Activated CD4-positive, alpha-beta memory T cell treated with anti-CD3 and anti-CD28 coated beads, Interleukin-2, amount 10 ng/mL, durations not matched to agents 7 days and 5 days (primary cell): ENCODE measurements at regions of chr7 and their contacts with region 1.

Region 1: GRCh38 chr7:129825496-129826267 is 127.1 kb downstream of the UBE2H start:
- DNase-seq: peak; percentile 90
- H3K4me3 Mint-ChIP-seq: peak overlapping the region; percentile 90
- H3K27ac Mint-ChIP-seq: peak overlapping the region; percentile 71
- H3K4me1 Mint-ChIP-seq: peaks cover 24% of the 10 kb centered on the region
- H3K27me3 Mint-ChIP-seq: peaks cover 3% of the 10 kb centered on the region

Region 2: DNA sequence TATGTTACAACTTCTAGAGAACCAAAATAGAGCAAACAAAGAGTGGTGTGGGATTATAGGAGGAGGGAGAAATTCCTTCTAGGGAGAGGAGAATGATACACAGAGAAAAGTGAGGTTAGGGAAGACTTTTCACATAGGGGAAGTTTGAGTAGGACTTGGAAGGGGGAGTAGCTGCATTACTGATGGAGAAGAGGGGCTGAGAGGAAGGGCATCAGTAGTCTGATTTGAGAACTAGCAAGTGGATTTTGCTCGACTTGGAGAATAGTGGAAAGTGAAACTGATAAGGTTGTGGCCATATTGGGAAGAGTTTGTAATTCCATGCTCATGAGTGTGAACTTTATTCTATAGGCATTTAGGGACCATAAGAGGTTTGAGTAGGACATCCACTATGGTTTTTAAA is 208.0 kb before region 1 on chr7:
- CTCF ChIA-PET with region 1: interaction called, 10 read pairs
- POLR2A ChIA-PET with region 1: interaction called, 8 read pairs
- DNase-seq: no peak
- H3K4me3 Mint-ChIP-seq: no peak overlapping the region
- H3K27ac Mint-ChIP-seq: no peak overlapping the region
- H3K4me1 Mint-ChIP-seq: peaks cover 54% of the 10 kb centered on the region
- H3K27me3 Mint-ChIP-seq: no peaks in the 10 kb centered on the region

Region 3: GRCh38 chr7:129664029-129665012 is 161.4 kb before region 1 on chr7:
- CTCF ChIA-PET with region 1: interaction called, 15 read pairs
- POLR2A ChIA-PET with region 1: no interaction called
- DNase-seq: no peak
- H3K4me3 Mint-ChIP-seq: no peak overlapping the region
- H3K27ac Mint-ChIP-seq: no peak overlapping the region
- H3K4me1 Mint-ChIP-seq: no peaks in the 10 kb centered on the region
- H3K27me3 Mint-ChIP-seq: no peaks in the 10 kb centered on the region

Region 4: GRCh38 chr7:129780257-129780973 is 45.3 kb before region 1 on chr7:
- CTCF ChIA-PET with region 1: interaction called, 16 read pairs
- POLR2A ChIA-PET with region 1: no interaction called
- DNase-seq: peak; percentile 80
- H3K4me3 Mint-ChIP-seq: peak overlapping the region; percentile 71
- H3K27ac Mint-ChIP-seq: no peak overlapping the region
- H3K4me1 Mint-ChIP-seq: peaks cover 35% of the 10 kb centered on the region
- H3K27me3 Mint-ChIP-seq: peaks cover 64% of the 10 kb centered on the region

Region 5: DNA sequence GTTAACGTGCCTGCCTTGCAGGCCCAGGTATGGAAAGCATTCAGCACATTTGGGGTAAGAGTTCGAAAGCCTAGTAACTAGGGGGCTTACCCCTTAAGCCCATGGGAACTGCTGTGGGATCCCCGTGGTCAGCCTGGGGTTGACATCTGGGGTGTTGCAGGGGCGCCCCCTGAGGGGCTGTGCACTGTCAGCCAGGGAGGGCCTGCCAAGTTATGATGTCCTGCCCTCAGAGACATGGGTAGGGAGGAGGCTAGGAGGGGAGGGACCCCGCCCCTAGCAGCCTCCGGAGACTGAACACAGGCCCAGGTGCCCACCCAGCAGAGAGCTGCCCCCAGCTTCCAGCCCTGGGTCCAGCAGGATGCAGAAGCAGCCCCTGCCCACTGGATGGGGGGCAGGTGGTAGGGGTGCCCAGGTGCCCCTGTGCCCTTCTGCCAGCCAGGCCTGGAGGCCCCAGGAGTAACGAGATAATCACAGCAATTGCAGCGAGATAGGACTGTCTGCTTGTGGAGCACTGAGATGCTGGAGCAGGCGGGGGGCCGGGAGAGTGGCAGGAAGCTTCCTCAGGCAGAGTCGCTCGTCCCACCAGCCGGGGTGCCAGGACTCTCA is 26.2 kb before region 1 on chr7:
- CTCF ChIA-PET with region 1: no interaction called
- POLR2A ChIA-PET with region 1: no interaction called
- DNase-seq: no peak
- H3K4me3 Mint-ChIP-seq: no peak overlapping the region
- H3K27ac Mint-ChIP-seq: no peak overlapping the region
- H3K4me1 Mint-ChIP-seq: no peaks in the 10 kb centered on the region
- H3K27me3 Mint-ChIP-seq: peaks cover 3% of the 10 kb centered on the region

Region 6: DNA sequence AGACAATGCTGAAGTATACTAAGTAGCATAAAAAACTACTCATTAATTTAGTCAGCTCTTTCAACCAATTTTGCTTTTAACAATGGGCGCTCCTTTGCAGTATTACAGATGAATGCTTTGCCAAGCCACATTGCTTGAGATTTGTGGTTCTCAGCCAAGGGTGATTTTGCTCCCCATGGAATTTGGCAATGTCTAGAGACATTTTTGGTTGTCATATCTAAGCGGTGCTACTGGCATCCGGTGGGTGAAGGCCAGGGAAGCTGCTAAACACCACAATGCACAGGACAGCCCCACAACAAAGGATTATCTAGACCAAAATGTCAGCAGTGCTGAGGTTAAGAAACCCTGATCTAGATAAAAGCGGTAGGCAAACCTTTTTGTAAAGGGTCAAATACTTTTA is 15.1 kb after region 1 on chr7:
- CTCF ChIA-PET with region 1: interaction called, 15 read pairs
- POLR2A ChIA-PET with region 1: no interaction called
- DNase-seq: no peak
- H3K4me3 Mint-ChIP-seq: no peak overlapping the region
- H3K27ac Mint-ChIP-seq: no peak overlapping the region
- H3K4me1 Mint-ChIP-seq: peaks cover 43% of the 10 kb centered on the region
- H3K27me3 Mint-ChIP-seq: no peaks in the 10 kb centered on the region

Region 7: DNA sequence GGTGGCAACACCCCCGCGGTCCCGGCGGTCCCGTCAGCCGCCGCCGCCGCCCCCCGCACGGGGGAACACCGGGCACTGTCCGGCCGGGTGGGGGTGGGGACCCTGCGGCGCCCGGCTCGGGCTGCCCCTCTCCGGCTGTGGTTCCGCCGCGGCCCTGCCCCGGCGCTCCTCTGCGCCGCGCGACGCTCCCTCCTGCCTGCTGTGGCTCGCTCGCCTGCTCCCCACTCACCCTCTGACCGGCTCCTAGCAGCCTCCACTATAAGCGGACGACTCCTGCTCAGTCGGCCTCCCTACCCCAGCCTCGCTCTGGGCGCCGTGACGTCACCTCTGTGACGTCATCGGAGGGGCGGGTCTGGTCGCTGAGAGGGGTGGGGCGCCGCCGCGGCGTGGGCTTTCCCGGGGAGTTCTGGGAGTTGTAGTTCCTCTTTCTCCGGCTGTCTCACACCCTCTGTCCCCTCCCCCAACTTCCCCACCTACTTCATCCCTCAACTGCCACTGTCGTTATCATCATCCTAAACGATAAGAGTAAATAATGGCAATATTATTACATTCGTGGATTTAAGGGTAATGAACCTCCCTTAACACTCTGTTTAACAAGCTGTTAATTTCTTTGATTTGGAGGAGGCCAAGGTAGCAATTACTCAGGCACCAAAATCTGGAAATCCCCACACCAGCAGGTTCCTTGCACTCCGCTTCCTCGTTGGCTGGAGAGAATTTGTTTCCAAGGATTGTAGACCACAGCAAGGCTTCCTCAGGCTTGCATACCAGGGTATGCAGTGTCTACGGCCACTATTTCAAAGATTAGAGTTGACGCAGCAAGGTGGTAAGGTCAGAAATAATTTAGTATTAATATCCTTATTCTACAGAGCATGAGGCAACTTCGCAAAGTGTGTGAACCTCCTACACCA is 127.2 kb after region 1 on chr7 and contains the start of gene UBE2H:
- CTCF ChIA-PET with region 1: interaction called, 7 read pairs
- POLR2A ChIA-PET with region 1: interaction called, 13 read pairs
- DNase-seq: peak; percentile 93
- H3K4me3 Mint-ChIP-seq: peak within 1 kb of the TSS; percentile 91
- H3K27ac Mint-ChIP-seq: peak within 1 kb of the TSS; percentile 96
- H3K4me1 Mint-ChIP-seq: peaks cover 11% of the 10 kb centered on the region
- H3K27me3 Mint-ChIP-seq: no peaks in the 10 kb centered on the region
- total RNA-seq, gene UBE2H: 57.9 to 58.4 TPM

Region 8: GRCh38 chr7:130010689-130011412 is 185.2 kb after region 1 on chr7:
- CTCF ChIA-PET with region 1: interaction called, 55 read pairs
- POLR2A ChIA-PET with region 1: interaction called, 6 read pairs
- DNase-seq: peak; percentile 89
- H3K4me3 Mint-ChIP-seq: no peak overlapping the region
- H3K27ac Mint-ChIP-seq: peak overlapping the region; percentile 79
- H3K4me1 Mint-ChIP-seq: peaks cover 13% of the 10 kb centered on the region
- H3K27me3 Mint-ChIP-seq: no peaks in the 10 kb centered on the region